Posterior vena cava (tissue), 2 donors: ENCODE measurements at regions of chr11 and their contacts with region 1.

Region 1: DNA sequence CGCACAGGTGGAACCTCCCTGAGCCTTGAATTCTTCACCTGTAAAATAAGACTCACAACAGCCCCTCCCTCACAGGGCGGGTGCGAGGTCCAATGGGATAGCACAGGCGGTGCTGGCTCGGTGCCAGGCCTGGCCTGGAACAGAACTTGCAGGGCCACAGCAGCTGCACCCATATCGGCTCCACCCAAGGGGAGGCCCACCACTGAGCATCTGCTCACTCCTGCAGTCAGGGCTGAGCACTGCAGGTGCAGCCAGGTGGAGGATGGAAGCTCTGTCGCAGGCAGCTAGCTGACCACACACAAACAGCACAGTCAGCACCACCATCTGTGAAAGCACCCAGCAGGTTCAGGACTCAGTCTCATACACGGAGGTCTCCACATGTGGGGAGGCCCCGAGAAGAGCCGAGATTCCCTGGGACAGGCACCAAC is 19.6 kb downstream of the VPS37C start:
- DNase-seq: peak; percentile 77

Region 2: GRCh38 chr11:60964801-60965200 is 176.8 kb before region 1 on chr11:
- intact Hi-C with region 1: loop called in 1 of 2 experiments (anchors 10 kb)
- DNase-seq: no peak